ENCODE measurements at regions of chr14 and their contacts with region 1.

Region 1: GRCh38 chr14:75969860-75970259 is 11.9 kb downstream of the TGFB3 start:
- DNase-seq: no peak

Region 2: DNA sequence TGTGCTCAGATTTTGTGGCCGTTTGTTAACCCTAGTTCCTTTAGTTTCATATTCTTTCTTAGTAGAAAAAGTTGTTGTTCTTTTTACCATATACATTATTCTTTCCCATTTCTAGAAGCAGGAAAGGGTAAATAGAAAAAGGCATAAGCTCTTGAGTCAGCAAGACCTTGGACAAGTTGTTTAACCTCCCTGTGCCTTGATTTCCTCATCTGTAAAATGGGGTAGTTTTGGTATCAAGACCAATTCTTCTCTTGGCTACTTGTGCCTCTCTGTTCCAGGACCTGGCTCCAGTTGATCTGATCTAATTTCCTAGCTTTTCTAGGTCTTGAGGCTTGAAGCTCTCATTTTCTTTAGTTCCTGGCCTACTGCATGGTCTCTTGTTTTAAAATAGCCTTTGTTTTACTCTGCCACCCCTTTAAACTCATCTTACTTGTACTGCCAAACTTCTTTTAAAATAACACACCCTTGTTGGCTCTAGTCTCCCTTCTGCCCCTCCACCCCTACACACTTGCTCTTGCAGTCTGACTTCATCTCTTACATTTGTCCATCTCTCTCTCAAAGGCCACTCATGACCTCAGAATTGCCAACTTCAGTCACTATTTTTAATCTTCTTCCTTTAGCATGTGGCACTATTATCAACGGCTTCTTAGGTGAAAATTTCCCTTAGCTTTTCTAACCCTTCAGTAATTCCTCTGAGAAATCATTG is 165.1 kb before region 1 on chr14:
- intact Hi-C with region 1: loop called in 1 of 2 experiments (anchors 1 kb)
- DNase-seq: no peak

Region 3: DNA sequence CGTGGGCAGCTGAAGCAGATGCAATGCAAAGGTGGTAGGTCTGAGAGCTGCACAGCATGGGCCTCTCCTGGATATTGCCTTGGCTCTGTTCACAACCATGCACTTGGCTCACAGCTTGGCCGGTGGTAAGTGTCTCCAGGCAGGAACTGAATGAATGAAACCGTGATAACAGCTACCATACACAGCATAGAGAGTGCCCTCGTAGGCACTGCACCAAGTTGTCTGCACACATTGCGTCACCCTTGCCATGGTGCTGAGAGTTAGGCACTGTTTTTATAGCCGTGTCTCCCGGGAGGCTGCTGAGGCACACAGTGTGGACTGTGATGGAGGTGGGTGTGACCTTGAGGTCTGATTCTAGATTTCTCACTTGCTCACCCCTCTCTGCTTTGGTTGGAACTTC is 633.9 kb after region 1 on chr14:
- intact Hi-C with region 1: no loop called
- DNase-seq: no peak